Pancreas (tissue), 10 donors: ENCODE measurements at regions of chr16 and their contacts with region 1.

Region 1: DNA sequence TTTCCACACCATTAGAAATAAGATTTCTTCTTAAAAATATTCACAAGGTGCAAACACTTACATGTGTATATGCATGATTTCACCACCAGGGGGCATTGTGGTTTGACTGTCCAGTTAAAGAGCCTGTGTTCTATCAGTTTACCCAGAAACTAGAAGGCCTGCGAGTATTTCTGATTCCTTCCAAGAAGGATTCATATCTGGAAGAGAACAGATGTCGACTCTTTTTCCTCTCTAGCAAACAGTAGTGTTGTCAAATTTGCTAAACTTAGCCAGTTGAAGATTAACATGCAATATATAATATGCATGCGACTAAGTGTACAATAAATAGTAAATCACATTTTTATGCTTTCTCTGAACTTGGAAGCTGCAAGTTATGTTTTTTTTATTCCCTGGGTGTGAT is 404.1 kb downstream of the WWOX start:
- DNase-seq: peak in 3 of 6 donors; percentile 15 to 40 (median 36)
- ATAC-seq: peak in 3 of 4 donors; percentile 59 to 68 (median 66)
- H3K4me3 ChIP-seq: no peak overlapping the region
- H3K27ac ChIP-seq: no peak overlapping the region
- H3K4me1 ChIP-seq: peaks cover 0 to 4% (median 0%) of the 10 kb centered on the region in 3 donors
- H3K27me3 ChIP-seq: no peaks in the 10 kb centered on the region
- CTCF ChIP-seq: peak; percentile 32 to 85 (median 76)

Region 2: DNA sequence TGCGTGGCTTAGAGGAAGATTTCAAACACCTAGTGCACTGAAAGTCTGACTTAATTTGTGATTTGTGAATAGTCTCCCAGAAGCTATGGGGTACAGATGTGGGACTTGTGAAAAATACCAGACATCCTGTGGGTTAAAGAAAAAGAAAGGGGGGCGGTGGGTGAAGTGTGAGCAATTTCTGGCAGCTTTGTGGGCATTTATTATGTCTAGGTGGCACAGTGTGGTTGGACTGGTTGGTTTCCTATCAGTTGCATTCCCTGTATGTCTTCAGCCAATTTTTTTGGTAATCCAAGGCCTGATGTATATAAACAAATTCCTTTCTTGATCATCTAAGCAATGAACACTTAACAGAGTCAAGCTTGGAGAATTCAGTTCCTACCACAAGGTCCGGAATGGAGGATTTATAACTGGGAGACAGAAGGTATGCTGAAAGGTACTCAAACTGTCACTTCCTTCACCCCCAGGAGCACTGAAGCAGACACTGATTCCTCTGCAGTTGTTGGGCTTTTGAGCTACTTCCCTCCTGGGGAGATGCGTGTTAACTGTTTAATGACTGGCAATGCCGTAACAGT is 192.5 kb before region 1 on chr16:
- intact Hi-C with region 1: no loop called
- DNase-seq: no peak
- ATAC-seq: peak in 2 of 4 donors; percentile 16 to 24
- H3K4me3 ChIP-seq: no peak overlapping the region
- H3K27ac ChIP-seq: peak overlapping the region in 1 of 4 donors; percentile 18
- H3K4me1 ChIP-seq: peaks cover 6 to 22% (median 9%) of the 10 kb centered on the region in 3 donors
- H3K27me3 ChIP-seq: no peaks in the 10 kb centered on the region
- CTCF ChIP-seq: no peak

Region 3: GRCh38 chr16:78421181-78421708 is 82.4 kb before region 1 on chr16:
- intact Hi-C with region 1: no loop called
- DNase-seq: no peak
- ATAC-seq: no peak
- H3K4me3 ChIP-seq: no peak overlapping the region
- H3K27ac ChIP-seq: no peak overlapping the region
- H3K4me1 ChIP-seq: no peaks in the 10 kb centered on the region
- H3K27me3 ChIP-seq: no peaks in the 10 kb centered on the region
- CTCF ChIP-seq: no peak

Region 4: DNA sequence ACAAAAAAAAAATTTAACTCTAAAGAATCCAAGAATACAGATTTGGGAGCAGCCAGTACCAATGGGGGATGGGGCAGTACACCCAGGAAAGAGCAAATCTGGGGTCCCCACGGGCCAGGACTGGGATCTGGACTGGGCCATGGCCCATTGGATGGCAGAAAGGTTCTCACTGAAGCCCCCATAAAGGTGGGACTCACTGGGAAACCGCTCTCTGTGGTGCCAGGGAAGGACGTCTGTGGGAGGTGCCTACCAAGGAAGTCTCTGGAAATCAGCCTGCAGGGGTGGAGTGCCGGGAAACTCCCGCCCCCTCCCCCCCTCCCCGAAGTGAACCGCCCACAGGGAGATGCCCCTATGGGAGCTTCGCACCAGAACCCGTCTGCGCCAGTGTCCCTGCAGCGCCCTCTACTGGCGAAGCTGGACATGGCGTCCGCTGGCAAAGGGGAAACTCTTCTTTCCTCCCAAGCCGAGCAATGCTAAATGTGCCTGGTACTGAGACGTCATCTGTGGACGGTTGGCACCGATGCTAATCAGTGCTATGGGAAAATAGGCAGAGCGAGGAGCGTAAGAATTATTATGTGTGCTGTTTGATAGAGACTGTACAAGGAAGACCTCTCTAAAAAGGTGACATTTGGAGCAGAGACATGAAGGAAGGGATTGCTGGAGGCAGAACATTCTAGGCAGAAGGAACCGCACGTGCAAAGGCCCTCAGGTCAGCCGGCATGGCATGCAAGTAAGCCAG is 266.9 kb after region 1 on chr16:
- intact Hi-C with region 1: loop called in 1 of 3 experiments (anchors 10 kb)
- DNase-seq: peak; percentile 51 to 92 (median 72)
- ATAC-seq: peak; percentile 77 to 97 (median 89)
- H3K4me3 ChIP-seq: no peak overlapping the region
- H3K27ac ChIP-seq: no peak overlapping the region
- H3K4me1 ChIP-seq: peaks cover 0 to 7% (median 0%) of the 10 kb centered on the region in 3 donors
- H3K27me3 ChIP-seq: no peaks in the 10 kb centered on the region
- CTCF ChIP-seq: peak; percentile 62 to 84 (median 78)